GM10248 (cell line): ENCODE measurements at regions of chr2 and their contacts with region 1.

Region 1: GRCh38 chr2:173027181-173028128 is 48.2 kb upstream of the MAP3K20 start:
- DNase-seq: peak; percentile 64
- CTCF ChIP-seq: peak; percentile 89

Region 2: DNA sequence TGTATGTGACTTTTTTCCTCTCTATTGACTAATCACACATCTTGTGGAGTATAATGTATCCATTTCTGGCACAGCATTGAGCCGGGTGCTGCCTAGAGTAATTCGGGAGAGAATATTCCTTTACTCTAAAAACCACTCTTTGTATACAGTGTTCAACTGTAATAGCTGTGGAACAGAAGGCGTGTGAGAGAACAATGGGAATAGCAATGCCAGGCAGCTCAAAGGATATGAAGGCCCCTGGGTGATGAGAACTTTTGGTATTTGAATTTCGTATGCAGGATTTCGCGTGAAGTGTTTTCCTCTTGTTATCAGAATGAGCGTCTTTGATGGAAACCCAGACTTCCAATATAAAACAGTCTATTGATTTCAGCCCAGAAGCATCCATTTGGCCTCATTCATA is 36.4 kb before region 1 on chr2:
- CTCF ChIA-PET with region 1: interaction called, 12 read pairs
- POLR2A ChIA-PET with region 1: no interaction called
- DNase-seq: no peak
- CTCF ChIP-seq: no peak

Region 3: DNA sequence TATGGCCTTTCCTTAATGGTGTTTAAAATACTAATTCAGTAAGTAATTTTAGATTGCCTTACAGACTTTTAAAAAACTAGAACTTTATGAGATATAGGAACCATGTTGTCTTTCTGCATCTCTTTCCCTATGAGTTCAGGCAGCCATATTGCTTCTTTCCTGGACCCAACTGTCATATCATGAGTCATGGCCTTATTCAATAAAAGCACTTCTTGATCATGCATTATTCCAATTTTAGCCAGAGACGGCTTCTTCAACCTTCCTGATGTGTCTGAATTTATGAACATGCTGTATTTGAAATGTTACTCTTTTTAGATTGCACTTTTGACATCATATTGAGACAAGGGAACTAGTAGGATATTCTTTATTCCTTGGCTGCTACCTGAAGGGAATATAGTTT is 17.2 kb before region 1 on chr2:
- CTCF ChIA-PET with region 1: interaction called, 42 read pairs
- POLR2A ChIA-PET with region 1: no interaction called
- DNase-seq: no peak
- CTCF ChIP-seq: no peak

Region 4: GRCh38 chr2:173043476-173043875 is 16.0 kb after region 1 on chr2:
- CTCF ChIA-PET with region 1: interaction called, 42 read pairs
- POLR2A ChIA-PET with region 1: no interaction called
- DNase-seq: no peak
- CTCF ChIP-seq: no peak

Region 5: DNA sequence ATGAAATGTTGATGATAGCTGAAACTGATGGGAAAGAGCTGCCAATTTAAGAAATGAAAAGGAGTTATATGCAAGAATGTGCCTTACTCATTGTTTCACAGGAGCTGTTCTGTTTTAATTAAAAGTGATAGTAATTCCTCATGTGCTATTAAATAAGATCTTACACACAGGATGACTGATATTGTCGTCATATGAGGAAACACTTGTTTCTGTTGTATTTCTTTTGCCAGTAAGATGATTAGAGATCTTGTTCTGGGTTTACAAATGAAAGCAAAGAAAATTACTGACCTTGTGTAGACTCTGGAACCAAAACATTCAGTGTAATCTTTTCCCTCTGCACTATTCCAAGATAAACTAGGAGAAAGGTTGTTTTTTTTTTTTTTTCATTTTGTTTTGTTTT is 171.8 kb after region 1 on chr2:
- CTCF ChIA-PET with region 1: interaction called, 12 read pairs
- POLR2A ChIA-PET with region 1: no interaction called
- DNase-seq: no peak
- CTCF ChIP-seq: no peak

Region 6: GRCh38 chr2:173218326-173219056 is 191.0 kb after region 1 on chr2:
- CTCF ChIA-PET with region 1: interaction called, 92 read pairs
- POLR2A ChIA-PET with region 1: no interaction called
- DNase-seq: no peak
- CTCF ChIP-seq: no peak

Region 7: GRCh38 chr2:173311844-173312606 is 284.6 kb after region 1 on chr2:
- CTCF ChIA-PET with region 1: no interaction called
- POLR2A ChIA-PET with region 1: no interaction called
- DNase-seq: no peak
- CTCF ChIP-seq: no peak